ENCODE measurements at regions of chr6 and their contacts with region 1.

Region 1: GRCh38 chr6:106568530-106568929 is 60.8 kb downstream of the RTN4IP1 start:
- DNase-seq: no peak
- ATAC-seq: no peak
- H3K4me3 ChIP-seq: no peak overlapping the region
- H3K27ac ChIP-seq: no peak overlapping the region
- H3K4me1 ChIP-seq: no peaks in the 10 kb centered on the region
- H3K27me3 ChIP-seq: no peaks in the 10 kb centered on the region

Region 2: DNA sequence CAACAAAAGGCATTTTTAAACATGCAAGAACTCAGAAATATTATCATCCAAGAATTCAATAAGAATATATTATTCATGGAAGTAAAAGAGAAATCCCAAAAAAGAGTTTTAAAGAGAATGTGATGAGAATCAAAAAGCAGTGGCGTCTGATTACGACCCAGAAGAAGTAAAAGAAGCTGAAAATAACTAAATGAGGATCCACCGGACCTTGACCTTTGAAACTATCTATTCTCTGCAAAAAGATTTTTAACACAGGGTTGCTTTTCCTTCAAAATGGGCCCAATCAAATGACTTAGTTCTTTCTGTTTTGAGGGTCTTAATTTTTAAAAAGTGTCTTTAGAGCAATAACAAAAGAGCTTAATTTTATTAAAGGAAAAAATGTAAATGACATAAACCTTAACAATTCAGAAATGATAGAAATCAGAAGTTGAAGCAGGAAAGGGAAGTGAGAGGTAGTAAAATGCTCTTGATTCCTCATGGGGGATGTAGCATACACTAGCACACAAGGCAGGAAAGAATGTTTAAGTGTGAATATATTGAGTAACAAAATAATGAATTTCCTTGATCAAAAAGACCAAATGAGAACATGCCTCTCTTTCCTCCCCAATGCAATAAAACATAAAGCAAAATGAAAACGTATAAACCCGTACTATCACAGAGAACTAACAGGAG is 705.5 kb before region 1 on chr6:
- intact Hi-C with region 1: no loop called
- DNase-seq: no peak
- ATAC-seq: no peak
- H3K4me3 ChIP-seq: no peak overlapping the region
- H3K27ac ChIP-seq: no peak overlapping the region
- H3K4me1 ChIP-seq: no peaks in the 10 kb centered on the region
- H3K27me3 ChIP-seq: no peaks in the 10 kb centered on the region

Region 3: GRCh38 chr6:106444777-106445507 is 123.6 kb before region 1 on chr6:
- intact Hi-C with region 1: loop called (anchors 2 to 5 kb)
- DNase-seq: no peak
- ATAC-seq: peak in 1 of 2 donors; percentile 73
- H3K4me3 ChIP-seq: no peak overlapping the region
- H3K27ac ChIP-seq: no peak overlapping the region
- H3K4me1 ChIP-seq: no peaks in the 10 kb centered on the region
- H3K27me3 ChIP-seq: no peaks in the 10 kb centered on the region

Region 4: DNA sequence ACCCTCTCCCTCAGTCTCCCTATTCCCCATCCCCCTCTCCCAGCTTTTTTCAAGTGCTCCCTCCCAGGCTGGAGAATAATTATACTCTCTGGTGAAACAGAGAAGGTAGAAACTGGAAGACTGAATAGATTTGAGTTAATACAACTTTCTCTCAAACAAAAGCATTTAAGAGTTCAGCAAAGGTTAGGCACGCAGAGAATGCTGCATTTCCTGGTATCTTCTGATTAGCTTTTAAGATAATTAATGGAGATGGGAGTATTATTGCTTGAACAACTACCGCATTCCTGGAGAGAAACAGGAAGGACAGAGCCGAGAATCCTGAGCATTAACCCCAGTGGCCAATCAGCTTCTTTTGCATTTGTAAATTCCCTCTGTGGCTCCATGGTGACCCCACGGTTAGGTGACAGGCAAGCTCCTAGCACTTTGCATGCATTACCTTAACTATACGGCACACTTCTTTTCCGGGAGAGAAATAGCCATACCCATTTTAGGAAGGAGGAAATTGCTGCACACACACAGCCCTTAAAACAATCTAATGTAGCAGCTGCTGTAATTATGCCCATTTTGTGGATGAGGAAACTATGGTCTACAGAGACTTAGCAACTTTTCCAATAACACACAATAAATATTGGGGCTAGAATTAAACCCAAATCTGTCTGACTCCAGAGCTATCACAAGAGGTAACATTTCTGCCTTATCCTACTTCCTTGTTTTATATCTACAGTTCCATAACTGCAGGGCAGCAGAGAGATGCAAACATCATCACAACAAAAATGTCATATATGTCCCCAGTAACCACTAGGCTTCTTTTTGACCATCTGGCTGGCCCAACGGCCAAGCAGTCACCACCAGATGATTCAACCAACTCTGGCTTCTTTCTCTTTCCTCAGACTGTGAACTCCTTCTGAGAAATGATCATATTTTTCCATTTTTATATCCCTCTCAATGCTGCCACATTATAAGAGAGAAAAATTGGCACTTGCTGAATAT is 236.1 kb after region 1 on chr6:
- intact Hi-C with region 1: no loop called
- DNase-seq: no peak
- ATAC-seq: no peak
- H3K4me3 ChIP-seq: no peak overlapping the region
- H3K27ac ChIP-seq: no peak overlapping the region
- H3K4me1 ChIP-seq: no peaks in the 10 kb centered on the region
- H3K27me3 ChIP-seq: no peaks in the 10 kb centered on the region